CD4-positive, alpha-beta T cell (primary cell): ENCODE measurements at regions of chr2 and their contacts with region 1.

Region 1: GRCh38 chr2:197310271-197310985 is at the start of gene ANKRD44:
- DNase-seq: peak; percentile 81 to 96 (median 86)
- ATAC-seq: peak; percentile 77
- H3K4me3 ChIP-seq: peak within 1 kb of the TSS; percentile 94
- H3K4me3 Mint-ChIP-seq: peak within 1 kb of the TSS; percentile 95
- H3K27ac ChIP-seq: peak within 1 kb of the TSS; percentile 85 to 96
- H3K27ac Mint-ChIP-seq: peak within 1 kb of the TSS; percentile 95
- H3K4me1 ChIP-seq: peaks cover 46% of the 10 kb centered on the region
- H3K4me1 Mint-ChIP-seq: peaks cover 69% of the 10 kb centered on the region
- H3K27me3 ChIP-seq: no peaks in the 10 kb centered on the region
- H3K27me3 Mint-ChIP-seq: no peaks in the 10 kb centered on the region
- CTCF ChIP-seq: no peak
- total RNA-seq, gene ANKRD44: 170 to 186 TPM

Region 2: DNA sequence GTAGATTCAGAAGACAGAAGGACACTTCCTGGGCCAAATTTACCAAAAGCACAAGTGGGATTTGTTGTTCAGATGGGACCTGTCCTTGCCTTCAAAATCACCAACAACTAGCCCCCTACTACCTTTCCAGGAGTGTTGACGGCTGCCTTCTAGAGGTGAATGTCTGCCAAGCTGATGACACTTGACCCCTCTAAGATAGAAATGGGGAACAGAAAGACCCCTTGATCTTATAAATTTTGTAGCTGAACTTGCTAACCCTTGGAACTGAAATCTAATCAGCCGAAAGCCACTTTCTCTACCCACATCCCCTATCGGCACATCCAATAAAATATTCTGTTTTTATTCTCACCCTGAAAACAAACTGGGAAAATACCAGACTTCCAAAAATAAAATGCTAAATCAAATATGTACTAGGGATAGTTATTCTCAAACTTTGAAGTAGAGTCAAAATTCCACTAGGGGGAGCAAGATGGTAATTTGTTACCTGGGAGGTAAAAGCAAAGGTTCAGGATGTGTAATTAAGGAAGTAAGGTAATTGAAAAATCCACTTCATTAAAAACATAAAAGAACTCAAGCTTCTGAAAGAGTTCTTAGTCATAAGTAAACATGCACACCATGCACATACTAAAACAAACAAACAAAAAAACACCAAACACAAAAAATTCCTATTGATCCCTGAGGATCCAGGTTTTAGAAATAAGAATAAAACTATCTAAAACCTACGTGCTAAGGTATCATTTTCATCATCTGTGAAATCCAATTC is 119.1 kb before region 1 on chr2:
- CTCF ChIA-PET with region 1: interaction called, 69 read pairs
- POLR2A ChIA-PET with region 1: interaction called, 754 read pairs
- intact Hi-C with region 1: loop called (anchors 1 kb)
- DNase-seq: peak in 3 of 14 experiments; percentile 83 to 84 (median 84)
- ATAC-seq: peak; percentile 59
- H3K4me3 ChIP-seq: no peak overlapping the region
- H3K4me3 Mint-ChIP-seq: peak overlapping the region; percentile 52
- H3K27ac ChIP-seq: peak overlapping the region; percentile 62 to 64
- H3K27ac Mint-ChIP-seq: peak overlapping the region; percentile 95
- H3K4me1 ChIP-seq: peaks cover 48% of the 10 kb centered on the region
- H3K4me1 Mint-ChIP-seq: peaks cover 82% of the 10 kb centered on the region
- H3K27me3 ChIP-seq: no peaks in the 10 kb centered on the region
- H3K27me3 Mint-ChIP-seq: no peaks in the 10 kb centered on the region
- CTCF ChIP-seq: peak; percentile 84

Region 3: GRCh38 chr2:197229509-197230443 is 80.7 kb before region 1 on chr2:
- CTCF ChIA-PET with region 1: interaction called, 5 read pairs
- POLR2A ChIA-PET with region 1: interaction called, 164 read pairs
- intact Hi-C with region 1: no loop called
- DNase-seq: no peak
- ATAC-seq: no peak
- H3K4me3 ChIP-seq: no peak overlapping the region
- H3K4me3 Mint-ChIP-seq: peak overlapping the region; percentile 36
- H3K27ac ChIP-seq: no peak overlapping the region
- H3K27ac Mint-ChIP-seq: peak overlapping the region; percentile 91
- H3K4me1 ChIP-seq: peaks cover 76% of the 10 kb centered on the region
- H3K4me1 Mint-ChIP-seq: peaks cover 96% of the 10 kb centered on the region
- H3K27me3 ChIP-seq: no peaks in the 10 kb centered on the region
- H3K27me3 Mint-ChIP-seq: no peaks in the 10 kb centered on the region
- CTCF ChIP-seq: no peak

Region 4: GRCh38 chr2:197255543-197255942 is 54.9 kb before region 1 on chr2:
- CTCF ChIA-PET with region 1: interaction called, 6 read pairs
- POLR2A ChIA-PET with region 1: interaction called, 52 read pairs
- intact Hi-C with region 1: loop called (anchors 5 kb)
- DNase-seq: peak; percentile 36 to 93 (median 56)
- ATAC-seq: peak; percentile 82
- H3K4me3 ChIP-seq: peak overlapping the region; percentile 13
- H3K4me3 Mint-ChIP-seq: peak overlapping the region; percentile 75
- H3K27ac ChIP-seq: peak overlapping the region; percentile 76 to 85
- H3K27ac Mint-ChIP-seq: peak overlapping the region; percentile 94
- H3K4me1 ChIP-seq: peaks cover 50% of the 10 kb centered on the region
- H3K4me1 Mint-ChIP-seq: peaks cover 89% of the 10 kb centered on the region
- H3K27me3 ChIP-seq: no peaks in the 10 kb centered on the region
- H3K27me3 Mint-ChIP-seq: no peaks in the 10 kb centered on the region
- CTCF ChIP-seq: no peak

Region 5: GRCh38 chr2:197279997-197280746 is 30.3 kb before region 1 on chr2:
- CTCF ChIA-PET with region 1: interaction called, 3 read pairs
- POLR2A ChIA-PET with region 1: interaction called, 15 read pairs
- intact Hi-C with region 1: no loop called
- DNase-seq: no peak
- ATAC-seq: peak; percentile 67
- H3K4me3 ChIP-seq: no peak overlapping the region
- H3K4me3 Mint-ChIP-seq: peak overlapping the region; percentile 30
- H3K27ac ChIP-seq: peak overlapping the region; percentile 33 to 46
- H3K27ac Mint-ChIP-seq: peak overlapping the region; percentile 80
- H3K4me1 ChIP-seq: peaks cover 83% of the 10 kb centered on the region
- H3K4me1 Mint-ChIP-seq: peaks cover 86% of the 10 kb centered on the region
- H3K27me3 ChIP-seq: no peaks in the 10 kb centered on the region
- H3K27me3 Mint-ChIP-seq: no peaks in the 10 kb centered on the region
- CTCF ChIP-seq: no peak

Region 6: GRCh38 chr2:197322724-197323720 is 12.6 kb after region 1 on chr2:
- CTCF ChIA-PET with region 1: interaction called, 5 read pairs
- POLR2A ChIA-PET with region 1: interaction called, 58 read pairs
- intact Hi-C with region 1: no loop called
- DNase-seq: peak in 4 of 14 experiments; percentile 45 to 51 (median 49)
- ATAC-seq: peak; percentile 84
- H3K4me3 ChIP-seq: peak overlapping the region; percentile 19
- H3K4me3 Mint-ChIP-seq: peak overlapping the region; percentile 62
- H3K27ac ChIP-seq: peak overlapping the region; percentile 63 to 69
- H3K27ac Mint-ChIP-seq: peak overlapping the region; percentile 94
- H3K4me1 ChIP-seq: peaks cover 42% of the 10 kb centered on the region
- H3K4me1 Mint-ChIP-seq: peaks cover 64% of the 10 kb centered on the region
- H3K27me3 ChIP-seq: no peaks in the 10 kb centered on the region
- H3K27me3 Mint-ChIP-seq: no peaks in the 10 kb centered on the region
- CTCF ChIP-seq: no peak

Region 7: GRCh38 chr2:197740200-197740599 is 429.8 kb after region 1 on chr2:
- CTCF ChIA-PET with region 1: no interaction called
- POLR2A ChIA-PET with region 1: no interaction called
- intact Hi-C with region 1: no loop called
- DNase-seq: no peak
- ATAC-seq: no peak
- H3K4me3 ChIP-seq: no peak overlapping the region
- H3K4me3 Mint-ChIP-seq: no peak overlapping the region
- H3K27ac ChIP-seq: no peak overlapping the region
- H3K27ac Mint-ChIP-seq: no peak overlapping the region
- H3K4me1 ChIP-seq: no peaks in the 10 kb centered on the region
- H3K4me1 Mint-ChIP-seq: no peaks in the 10 kb centered on the region
- H3K27me3 ChIP-seq: peaks cover 0 to 4% of the 10 kb centered on the region in 2 experiments
- H3K27me3 Mint-ChIP-seq: peaks cover 31% of the 10 kb centered on the region
- CTCF ChIP-seq: no peak